Posterior vena cava (tissue), 2 donors: ENCODE measurements at regions of chr22 and their contacts with region 1.

Region 1: DNA sequence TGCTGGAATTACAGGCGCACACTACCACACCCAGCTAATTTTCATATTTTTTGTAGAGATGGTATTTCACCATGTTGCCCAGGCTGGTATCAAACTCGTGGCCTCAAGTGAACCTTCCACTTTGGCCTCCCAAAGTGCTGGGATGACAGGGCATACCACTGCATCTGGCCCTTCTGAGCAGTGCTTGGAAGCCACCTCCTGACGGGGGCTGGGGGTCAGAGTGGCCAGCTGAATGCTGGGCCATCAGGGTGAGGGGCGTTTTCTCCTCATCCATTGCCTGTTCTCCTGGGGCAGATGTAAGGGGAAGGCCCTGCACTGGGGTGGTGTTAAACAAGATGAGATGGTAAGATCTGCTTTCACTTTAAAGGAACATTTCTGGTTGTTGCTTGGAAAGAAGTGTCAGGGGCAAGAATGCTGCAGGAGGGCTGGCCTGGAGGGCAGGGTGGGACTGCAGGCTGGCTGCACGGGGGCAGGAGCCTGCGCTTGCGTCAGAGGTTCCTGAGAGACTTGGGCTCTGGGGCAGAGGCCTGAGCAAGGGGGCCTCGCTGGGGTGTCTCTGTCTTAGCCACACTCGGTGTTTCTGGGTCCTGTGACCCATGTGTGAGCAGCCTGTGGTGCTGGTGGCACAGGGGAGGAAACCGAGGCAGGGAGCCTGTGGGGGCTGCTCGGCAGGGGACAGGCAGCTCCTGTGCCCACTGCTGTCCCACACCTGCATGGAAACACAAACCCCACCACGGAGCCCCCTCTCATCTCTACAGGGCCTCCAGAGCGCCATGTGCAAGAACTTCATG is 17.2 kb downstream of the DGCR6L start:
- DNase-seq: no peak

Region 2: DNA sequence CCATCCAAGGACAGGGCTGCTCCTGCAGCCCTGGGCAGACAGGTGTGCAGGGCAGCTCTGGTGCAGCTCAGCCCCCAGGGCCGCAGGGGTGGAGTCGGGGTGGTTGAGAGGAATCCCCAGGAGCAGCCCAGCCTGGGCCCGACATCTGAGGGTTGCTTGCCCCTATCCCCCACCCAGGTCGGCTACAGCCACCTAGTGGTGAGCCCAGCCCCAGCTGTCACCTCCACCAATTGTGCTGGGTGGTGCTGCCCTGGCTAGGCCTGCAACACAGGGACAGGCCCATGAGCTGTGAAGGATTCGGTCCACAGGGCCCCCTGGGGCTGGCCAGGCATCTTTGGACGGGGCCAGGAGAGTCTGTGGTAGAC is 64.1 kb before region 1 on chr22:
- intact Hi-C with region 1: loop called in 1 of 2 experiments (anchors 1 kb)
- DNase-seq: no peak

Region 3: DNA sequence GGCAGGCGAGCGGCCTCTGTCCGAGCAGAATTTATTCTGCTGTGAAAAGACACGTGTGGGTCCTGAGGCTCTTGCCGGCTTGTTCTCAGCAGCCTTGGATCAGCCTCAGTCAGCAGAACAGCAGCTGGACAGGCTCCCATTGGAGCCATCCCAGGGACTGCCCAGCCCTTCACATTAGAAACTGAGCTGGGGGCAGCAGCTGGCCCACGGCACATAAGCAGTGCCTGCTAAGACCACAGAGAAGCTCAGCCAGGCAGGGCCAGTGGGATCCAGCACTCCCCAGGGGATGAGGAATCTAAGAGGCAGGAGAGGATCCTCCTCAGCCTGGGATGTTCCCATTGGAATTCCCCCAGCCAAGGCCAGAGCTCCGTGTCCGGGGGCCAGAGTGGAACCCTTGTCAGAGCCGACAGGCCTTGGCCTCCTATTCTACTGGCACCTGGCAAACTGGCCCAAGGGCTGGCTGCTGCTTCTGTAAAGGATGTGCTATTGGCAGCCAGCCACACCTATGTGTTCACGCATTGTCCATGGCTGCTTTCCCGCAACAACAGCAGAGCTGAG is 52.8 kb before region 1 on chr22:
- intact Hi-C with region 1: no loop called
- DNase-seq: no peak

Region 4: DNA sequence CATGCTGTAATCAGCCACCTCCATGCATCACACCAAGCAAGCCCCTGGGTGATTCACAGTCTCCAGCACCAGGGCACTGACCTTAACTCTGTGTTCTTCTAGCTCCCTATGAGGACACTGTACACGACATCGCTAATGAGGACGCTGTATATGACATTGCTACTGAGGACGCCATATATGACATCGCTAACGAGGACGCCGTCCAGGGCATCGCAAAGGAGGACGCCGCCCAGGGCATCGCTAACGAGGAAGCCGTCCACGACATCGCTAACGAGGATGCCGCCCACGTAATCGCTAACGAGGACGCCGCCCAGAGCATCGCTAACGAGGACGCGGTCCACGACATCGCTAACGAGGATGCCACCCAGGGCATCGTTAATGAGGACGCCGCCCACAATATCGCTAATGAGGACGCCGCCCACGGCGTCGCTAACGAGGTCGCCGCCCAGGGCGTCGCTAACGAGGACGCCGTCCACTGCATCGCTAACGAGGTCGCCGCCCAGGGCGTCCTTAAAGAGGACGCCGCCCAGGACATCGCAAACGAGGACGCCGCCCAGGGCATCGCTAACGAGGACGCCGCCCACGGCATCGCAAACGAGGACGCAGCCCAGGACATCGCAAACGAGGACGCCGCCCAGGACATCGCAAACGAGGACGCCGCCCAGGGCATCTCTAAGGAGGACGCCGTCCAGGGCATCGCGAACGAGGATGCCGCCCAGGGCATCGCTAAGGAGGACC is 51.8 kb after region 1 on chr22:
- intact Hi-C with region 1: no loop called
- DNase-seq: no peak